WTC11 (cell line): ENCODE measurements at regions of chr1 and their contacts with region 1.

Region 1: DNA sequence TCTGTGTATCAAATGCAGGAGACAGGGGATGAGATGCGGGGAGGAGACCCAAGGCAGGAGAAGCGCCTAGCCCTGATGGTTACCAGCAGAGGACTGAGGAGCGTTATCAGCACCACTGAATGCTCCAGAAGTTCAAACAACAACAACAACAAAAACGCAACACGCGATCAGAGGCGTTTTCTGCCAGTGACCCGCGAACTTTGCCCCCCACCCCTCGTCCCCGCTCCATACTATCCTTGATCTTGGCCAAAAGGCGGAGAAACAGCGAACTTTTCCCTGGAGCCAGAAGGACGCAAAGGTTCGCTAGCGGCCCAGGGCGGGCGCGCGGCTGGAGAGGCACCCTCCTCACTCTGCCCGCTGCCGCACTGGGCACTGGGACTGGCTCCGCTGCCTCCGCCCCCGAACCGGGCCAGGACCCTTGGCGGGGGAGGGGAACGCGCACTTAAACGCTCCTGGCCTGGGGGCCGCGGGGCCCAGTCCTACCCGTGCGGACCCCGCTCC is 699 bp downstream of the ECHDC2 start:
- DNase-seq: no peak
- ATAC-seq: peak; percentile 62
- H3K4me3 Mint-ChIP-seq: peak overlapping the region; percentile 72
- H3K27ac Mint-ChIP-seq: no peak overlapping the region
- H3K4me1 Mint-ChIP-seq: peaks cover 5% of the 10 kb centered on the region; the same call in 1 of the 2 replicates
- H3K27me3 Mint-ChIP-seq: peaks cover 50% of the 10 kb centered on the region
- CTCF ChIP-seq: no peak

Region 2: DNA sequence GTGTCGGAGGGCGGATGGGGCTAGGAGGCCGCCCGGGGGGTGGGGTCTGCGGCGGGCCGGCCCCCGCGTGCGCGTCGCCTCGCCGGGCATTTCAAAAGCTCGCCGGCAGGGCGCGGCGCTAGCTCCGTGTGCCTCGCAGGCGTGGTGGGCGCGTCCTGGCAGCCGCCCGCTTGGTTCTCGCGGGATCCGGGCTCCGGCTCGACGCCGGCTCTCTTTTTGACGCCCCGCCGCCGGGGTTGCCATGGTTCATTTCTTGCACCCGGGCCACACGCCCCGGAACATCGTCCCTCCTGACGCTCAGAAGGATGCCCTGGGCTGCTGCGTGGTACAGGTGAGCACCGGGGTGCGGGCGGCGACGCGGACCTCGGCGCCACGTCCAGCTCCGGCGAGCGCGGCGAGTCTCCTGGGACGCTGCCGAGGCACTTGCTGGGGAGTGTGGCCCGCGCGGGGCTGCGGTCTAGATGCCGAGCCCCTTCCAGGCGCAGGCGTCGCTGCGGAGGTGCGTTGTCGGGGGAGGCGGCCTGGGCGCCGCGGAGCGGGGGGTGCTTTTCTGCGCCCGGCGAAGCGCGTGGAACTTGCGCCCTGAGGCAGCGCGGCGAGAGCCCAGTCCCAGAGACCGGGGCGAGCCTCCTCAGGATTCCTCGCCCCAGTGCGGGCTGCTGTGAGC is 78.1 kb before region 1 on chr1 and contains the start of gene ZYG11A:
- CTCF ChIA-PET with region 1: interaction called, 11 read pairs
- POLR2A ChIA-PET with region 1: interaction called, 4 read pairs
- DNase-seq: peak; percentile 80
- ATAC-seq: peak; percentile 80
- H3K4me3 Mint-ChIP-seq: peak within 1 kb of the TSS; percentile 80
- H3K27ac Mint-ChIP-seq: no peak within 1 kb of the TSS
- H3K4me1 Mint-ChIP-seq: peaks cover 9% of the 10 kb centered on the region
- H3K27me3 Mint-ChIP-seq: peaks cover 37% of the 10 kb centered on the region
- CTCF ChIP-seq: no peak
- total RNA-seq, gene ZYG11A: 5.2 to 7.3 TPM (median 6.1 TPM) in 3 replicates